ENCODE measurements at regions of chr17 and their contacts with region 1.

Region 1: GRCh38 chr17:49315551-49316257 is 46.3 kb downstream of the ZNF652 start:
- DNase-seq: peak; percentile 84
- H3K4me3 ChIP-seq: peak overlapping the region; percentile 58
- H3K27ac ChIP-seq: peak overlapping the region; percentile 55
- H3K4me1 ChIP-seq: peaks cover 28% of the 10 kb centered on the region
- CTCF ChIP-seq: peak; percentile 98

Region 2: GRCh38 chr17:49361902-49362722 is 46.4 kb after region 1 on chr17 and contains the start of gene ZNF652:
- CTCF ChIA-PET with region 1: no interaction called
- POLR2A ChIA-PET with region 1: interaction called, 4 read pairs
- intact Hi-C with region 1: loop called (anchors 2 kb)
- DNase-seq: peak; percentile 98
- H3K4me3 ChIP-seq: peak within 1 kb of the TSS; percentile 89
- H3K27ac ChIP-seq: peak within 1 kb of the TSS; percentile 88
- H3K4me1 ChIP-seq: peaks cover 44% of the 10 kb centered on the region
- CTCF ChIP-seq: no peak
- total RNA-seq, gene ZNF652: 35.4 and 36.8 TPM in 2 replicates